ENCODE measurements at regions of chr6 and their contacts with region 1.

Region 1: GRCh38 chr6:33200219-33201146 is at the starts of genes RXRB and SLC39A7:
- DNase-seq: peak; percentile 95 to 96
- H3K4me3 ChIP-seq: peak within 1 kb of the TSS; percentile 62
- H3K27ac ChIP-seq: peak within 1 kb of the TSS; percentile 79
- H3K4me1 ChIP-seq: peaks cover 28% of the 10 kb centered on the region
- H3K27me3 ChIP-seq: no peaks in the 10 kb centered on the region
- CTCF ChIP-seq: 0 out of 2 replicates have a peak, but pooled peaks have one; percentile 19
- total RNA-seq, gene RXRB: 49.8 and 51.5 TPM in 2 replicates
- total RNA-seq, gene SLC39A7: 96.4 and 110 TPM in 2 replicates

Region 2: GRCh38 chr6:32700391-32701040 is 500.0 kb before region 1 on chr6:
- CTCF ChIA-PET with region 1: no interaction called
- POLR2A ChIA-PET with region 1: no interaction called
- intact Hi-C with region 1: no loop called
- DNase-seq: peak; percentile 32 to 50
- H3K4me3 ChIP-seq: no peak overlapping the region
- H3K27ac ChIP-seq: no peak overlapping the region
- H3K4me1 ChIP-seq: no peaks in the 10 kb centered on the region
- H3K27me3 ChIP-seq: 0 out of 2 replicates have a peak, but pooled peaks cover 8% of the 10 kb centered on the region
- CTCF ChIP-seq: peak; percentile 70

Region 3: GRCh38 chr6:32984605-32985389 is 215.7 kb before region 1 on chr6:
- CTCF ChIA-PET with region 1: no interaction called
- POLR2A ChIA-PET with region 1: no interaction called
- intact Hi-C with region 1: no loop called
- DNase-seq: peak; percentile 85
- H3K4me3 ChIP-seq: no peak overlapping the region
- H3K27ac ChIP-seq: no peak overlapping the region
- H3K4me1 ChIP-seq: 0 out of 2 replicates have a peak, but pooled peaks cover 4% of the 10 kb centered on the region
- H3K27me3 ChIP-seq: 0 out of 2 replicates have a peak, but pooled peaks cover 18% of the 10 kb centered on the region
- CTCF ChIP-seq: peak; percentile 89

Region 4: GRCh38 chr6:33174784-33175183 is 25.7 kb before region 1 on chr6:
- CTCF ChIA-PET with region 1: no interaction called
- POLR2A ChIA-PET with region 1: interaction called, 12 read pairs
- intact Hi-C with region 1: no loop called
- DNase-seq: no peak
- H3K4me3 ChIP-seq: no peak overlapping the region
- H3K27ac ChIP-seq: no peak overlapping the region
- H3K4me1 ChIP-seq: no peaks in the 10 kb centered on the region
- H3K27me3 ChIP-seq: peaks cover 46% of the 10 kb centered on the region
- CTCF ChIP-seq: no peak

Region 5: DNA sequence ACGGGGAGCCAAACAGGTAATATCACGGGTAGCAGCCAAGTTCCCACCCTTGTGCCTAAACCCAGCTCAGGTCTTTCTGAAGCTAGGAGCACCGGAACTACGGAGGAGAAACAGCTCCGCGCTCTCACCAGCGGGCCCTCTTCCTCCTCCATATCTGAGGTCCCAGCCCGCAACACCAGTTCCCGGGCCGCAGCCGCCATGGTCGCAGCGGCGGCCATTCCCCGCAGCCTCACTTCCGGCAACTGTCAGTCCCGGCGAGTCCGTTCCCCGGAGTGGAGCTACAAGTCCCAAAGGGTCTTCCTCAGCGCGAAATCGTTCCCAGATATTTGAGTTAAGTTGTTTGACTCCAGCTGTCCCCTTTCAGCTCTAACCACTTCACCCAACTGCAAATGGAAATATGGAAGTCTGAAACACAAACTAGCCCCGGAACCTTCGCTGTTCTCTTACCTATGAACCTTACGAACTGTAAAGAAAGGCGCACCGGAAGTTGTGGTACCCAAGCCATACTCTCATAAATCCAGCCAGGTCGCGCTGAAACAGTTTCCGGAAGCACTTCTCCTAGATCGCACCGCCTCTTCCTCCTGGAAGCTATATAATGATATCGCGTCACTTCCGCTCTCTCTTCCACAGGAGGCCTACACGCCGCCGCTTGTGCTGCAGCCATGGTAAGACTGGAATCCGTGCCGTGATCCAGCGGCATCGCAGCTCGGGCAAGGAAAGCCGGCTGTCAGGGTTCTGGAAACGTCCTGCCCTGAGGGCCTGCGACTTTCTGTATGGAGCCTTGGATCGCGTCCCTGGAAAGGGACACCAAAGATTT is 71.2 kb after region 1 on chr6 and contains the starts of genes RPS18 and VPS52:
- CTCF ChIA-PET with region 1: no interaction called
- POLR2A ChIA-PET with region 1: no interaction called
- intact Hi-C with region 1: loop called (anchors 10 kb)
- DNase-seq: peak; percentile 88 to 94
- H3K4me3 ChIP-seq: peak within 1 kb of the TSS; percentile 70
- H3K27ac ChIP-seq: peak within 1 kb of the TSS; percentile 79
- H3K4me1 ChIP-seq: peaks cover 39% of the 10 kb centered on the region
- H3K27me3 ChIP-seq: no peaks in the 10 kb centered on the region
- CTCF ChIP-seq: no peak
- total RNA-seq, gene RPS18: 2,057 and 2,442 TPM in 2 replicates
- total RNA-seq, gene VPS52: 46.2 and 48.3 TPM in 2 replicates

Region 6: GRCh38 chr6:33299237-33299944 is 98.9 kb after region 1 on chr6:
- CTCF ChIA-PET with region 1: no interaction called
- POLR2A ChIA-PET with region 1: interaction called, 4 read pairs
- intact Hi-C with region 1: loop called (anchors 2 kb)
- DNase-seq: peak; percentile 72 to 87
- H3K4me3 ChIP-seq: peak overlapping the region; percentile 75
- H3K27ac ChIP-seq: peak overlapping the region; percentile 88
- H3K4me1 ChIP-seq: peaks cover 23% of the 10 kb centered on the region
- H3K27me3 ChIP-seq: no peaks in the 10 kb centered on the region
- CTCF ChIP-seq: peak; percentile 78

Region 7: GRCh38 chr6:33417903-33418689 is 217.6 kb after region 1 on chr6 and contains the start of gene CUTA:
- CTCF ChIA-PET with region 1: no interaction called
- POLR2A ChIA-PET with region 1: no interaction called
- intact Hi-C with region 1: loop called (anchors 10 kb)
- DNase-seq: peak; percentile 98 to 99
- H3K4me3 ChIP-seq: peak within 1 kb of the TSS; percentile 84
- H3K27ac ChIP-seq: peak within 1 kb of the TSS; percentile 74
- H3K4me1 ChIP-seq: peaks cover 15% of the 10 kb centered on the region
- H3K27me3 ChIP-seq: peaks cover 21% of the 10 kb centered on the region
- CTCF ChIP-seq: peak; percentile 48
- total RNA-seq, gene CUTA: 213 and 220 TPM in 2 replicates

Region 8: GRCh38 chr6:33665957-33666356 is 465.5 kb after region 1 on chr6:
- CTCF ChIA-PET with region 1: no interaction called
- POLR2A ChIA-PET with region 1: no interaction called
- intact Hi-C with region 1: no loop called
- DNase-seq: no peak
- H3K4me3 ChIP-seq: no peak overlapping the region
- H3K27ac ChIP-seq: no peak overlapping the region
- H3K4me1 ChIP-seq: peaks cover 6% of the 10 kb centered on the region
- H3K27me3 ChIP-seq: no peaks in the 10 kb centered on the region
- CTCF ChIP-seq: no peak

Region 9: GRCh38 chr6:33779290-33779689 is 578.8 kb after region 1 on chr6:
- CTCF ChIA-PET with region 1: interaction called, 8 read pairs
- POLR2A ChIA-PET with region 1: no interaction called
- intact Hi-C with region 1: loop called (anchors 5 kb)
- DNase-seq: no peak
- H3K4me3 ChIP-seq: no peak overlapping the region
- H3K27ac ChIP-seq: no peak overlapping the region
- H3K4me1 ChIP-seq: peaks cover 31% of the 10 kb centered on the region
- H3K27me3 ChIP-seq: no peaks in the 10 kb centered on the region
- CTCF ChIP-seq: no peak